SK-N-SH (cell line): ENCODE measurements at regions of chr1 and their contacts with region 1.

Region 1: DNA sequence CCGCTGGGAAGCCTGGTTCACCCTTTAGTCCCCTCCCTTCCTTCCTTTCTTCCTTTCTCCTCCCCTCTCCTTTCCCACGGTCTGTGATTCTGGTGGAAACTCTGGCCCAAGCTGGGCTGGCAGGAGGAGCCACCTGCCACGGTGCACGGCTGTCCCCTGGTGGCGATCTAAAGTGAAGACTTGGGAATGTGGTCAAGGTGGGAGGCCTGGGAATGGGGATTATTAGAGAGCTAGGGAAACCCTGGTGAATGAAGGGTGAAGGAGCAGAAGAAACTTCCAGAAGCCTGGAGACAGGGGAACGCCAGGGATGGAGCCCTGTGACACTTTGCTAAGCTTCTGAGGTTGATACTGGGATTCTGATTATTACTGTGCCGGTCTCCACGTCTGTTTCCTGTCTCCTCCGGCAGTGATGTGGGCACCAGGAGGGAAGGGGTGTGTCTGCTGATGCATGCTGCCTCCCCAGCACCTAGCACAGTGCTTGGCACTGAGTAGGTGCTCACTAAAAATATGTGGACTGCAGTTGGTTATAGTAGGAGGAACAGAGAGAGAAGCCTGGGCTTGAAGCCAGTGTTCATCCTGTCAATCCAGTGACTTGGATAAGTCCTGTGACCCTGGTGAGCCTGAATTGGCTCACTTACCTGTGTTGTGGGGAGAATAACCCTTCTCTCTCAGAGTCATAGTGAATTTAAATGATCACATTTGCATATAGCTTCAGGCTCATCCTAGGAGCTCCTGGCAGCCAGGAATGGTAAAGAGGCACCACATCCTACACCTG is 71.2 kb upstream of the NBPF3 start:
- DNase-seq: peak; percentile 84
- H3K4me3 ChIP-seq: peak overlapping the region in 1 of 2 experiments; percentile 51; a peak in 1 of 4 replicates
- H3K27ac ChIP-seq: no peak overlapping the region
- H3K4me1 ChIP-seq: no peaks in the 10 kb centered on the region; a peak in 1 of 4 replicates
- H3K27me3 ChIP-seq: no peaks in the 10 kb centered on the region
- CTCF ChIP-seq: peak; percentile 99
- EP300 ChIP-seq: no peak
- RAD21 ChIP-seq: peak; percentile 100

Region 2: DNA sequence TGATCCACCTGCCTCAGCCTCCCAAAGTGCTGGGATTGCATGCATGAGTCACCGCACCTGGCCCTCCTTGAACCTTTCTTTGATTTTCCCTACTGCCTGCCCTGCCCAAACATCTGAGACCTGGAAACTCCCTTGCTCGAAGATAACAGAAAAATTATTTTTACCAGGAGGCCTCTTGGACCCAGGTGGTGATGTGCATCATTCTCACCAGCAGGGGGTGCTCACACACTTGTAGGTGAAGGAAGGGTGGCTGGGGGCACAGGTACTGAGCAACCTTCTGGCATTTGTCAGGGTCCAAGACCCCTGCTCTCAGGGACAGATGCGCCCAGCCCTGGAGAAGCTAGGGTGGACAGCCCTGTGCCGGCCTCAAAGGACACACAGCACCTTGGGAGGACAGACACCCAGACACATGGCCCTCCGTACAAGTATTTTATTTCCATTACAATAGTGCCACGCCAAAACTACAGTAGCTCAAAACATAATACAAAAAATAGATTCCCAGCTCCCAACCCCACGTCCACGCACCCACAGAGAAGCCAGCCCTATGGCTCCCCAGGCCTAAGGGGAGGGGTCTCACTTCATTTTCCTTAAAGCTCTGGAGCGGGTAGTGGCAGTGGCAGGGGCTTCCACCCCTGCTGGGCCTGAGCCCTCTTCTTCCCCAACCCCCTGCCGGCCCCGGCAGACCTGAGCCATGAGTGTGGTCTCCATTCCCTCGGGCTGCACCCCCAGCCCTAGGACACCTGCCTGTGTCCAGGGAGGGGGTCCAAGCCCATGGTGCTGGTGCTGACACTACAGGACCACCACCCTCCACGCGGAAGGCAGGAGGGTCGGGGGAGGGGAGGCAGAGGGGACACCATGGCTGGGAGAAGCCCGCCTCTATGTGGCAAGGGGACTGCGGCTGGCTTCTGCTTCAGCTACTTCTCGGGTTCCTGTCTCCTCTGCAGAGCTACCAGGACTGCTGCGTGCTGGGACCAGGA is 151.6 kb before region 1 on chr1:
- CTCF ChIA-PET with region 1: interaction called, 80 read pairs
- POLR2A ChIA-PET with region 1: no interaction called
- DNase-seq: peak; percentile 67
- H3K4me3 ChIP-seq: no peak overlapping the region; a peak in 1 of 4 replicates
- H3K27ac ChIP-seq: no peak overlapping the region; a peak in 1 of 4 replicates
- H3K4me1 ChIP-seq: peaks cover 0 to 13% of the 10 kb centered on the region in 2 experiments; a peak in 1 of 4 replicates
- H3K27me3 ChIP-seq: no peaks in the 10 kb centered on the region
- CTCF ChIP-seq: peak; percentile 86
- EP300 ChIP-seq: no peak
- RAD21 ChIP-seq: peak; percentile 52

Region 3: GRCh38 chr1:21270086-21270689 is 98.5 kb before region 1 on chr1:
- CTCF ChIA-PET with region 1: interaction called, 58 read pairs
- POLR2A ChIA-PET with region 1: no interaction called
- DNase-seq: peak; percentile 75
- H3K4me3 ChIP-seq: no peak overlapping the region; a peak in 1 of 4 replicates
- H3K27ac ChIP-seq: peak overlapping the region in 1 of 2 experiments; percentile 59; a peak in 1 of 4 replicates
- H3K4me1 ChIP-seq: peaks cover 0 to 44% of the 10 kb centered on the region in 2 experiments; a peak in 1 of 4 replicates
- H3K27me3 ChIP-seq: no peaks in the 10 kb centered on the region
- CTCF ChIP-seq: peak; percentile 92
- EP300 ChIP-seq: no peak
- RAD21 ChIP-seq: peak; percentile 62

Region 4: DNA sequence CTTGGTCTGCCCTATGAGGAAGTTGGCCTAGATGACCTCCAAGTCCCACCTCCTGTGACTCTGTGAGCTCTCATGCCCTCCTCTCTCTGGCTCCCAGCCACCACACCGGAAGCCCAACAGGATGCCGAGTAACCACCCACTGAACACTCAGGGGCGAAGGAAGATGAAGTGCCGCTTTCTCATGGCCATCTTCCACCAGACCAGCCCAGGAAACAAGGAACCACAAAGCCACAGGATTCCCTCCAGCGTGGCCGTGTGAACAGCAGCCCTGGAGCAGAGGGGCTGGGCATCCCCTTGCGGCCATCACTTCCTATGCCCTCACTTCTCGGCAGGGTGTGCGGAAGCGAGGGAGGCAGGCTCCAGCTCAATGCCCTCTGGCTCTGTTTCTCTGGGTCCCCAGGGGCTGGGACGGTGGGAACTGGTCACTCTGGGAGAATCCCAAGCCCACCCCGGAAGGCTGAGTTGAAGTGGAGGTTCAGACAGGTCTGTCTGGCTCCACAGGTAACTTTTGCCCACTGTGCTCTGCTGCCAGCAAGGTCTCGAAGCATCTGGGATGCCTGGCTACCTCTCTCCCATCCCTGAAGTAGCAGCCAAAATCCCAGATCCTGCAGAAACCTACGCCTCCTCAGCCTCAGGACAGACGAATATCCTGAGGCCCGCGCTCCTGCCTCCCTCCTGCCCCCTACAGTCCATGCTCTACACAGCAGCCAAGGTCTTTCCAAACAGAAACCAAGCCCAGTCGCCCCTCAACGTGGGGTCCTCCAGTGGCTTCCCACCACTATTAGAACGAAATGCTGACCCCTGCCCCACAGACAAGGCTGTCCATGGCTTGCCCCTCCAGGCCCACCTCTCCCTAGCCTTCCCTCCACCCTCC is 34.3 kb before region 1 on chr1:
- CTCF ChIA-PET with region 1: interaction called, 20 read pairs
- POLR2A ChIA-PET with region 1: no interaction called
- DNase-seq: peak; percentile 59
- H3K4me3 ChIP-seq: peak overlapping the region in 1 of 2 experiments; percentile 23; a peak in 1 of 4 replicates
- H3K27ac ChIP-seq: peak overlapping the region; percentile 56 to 91; a peak in 3 of 4 replicates
- H3K4me1 ChIP-seq: peaks cover 26 to 64% of the 10 kb centered on the region in 2 experiments
- H3K27me3 ChIP-seq: no peaks in the 10 kb centered on the region
- CTCF ChIP-seq: peak; percentile 80
- EP300 ChIP-seq: no peak
- RAD21 ChIP-seq: peak; percentile 66

Region 5: DNA sequence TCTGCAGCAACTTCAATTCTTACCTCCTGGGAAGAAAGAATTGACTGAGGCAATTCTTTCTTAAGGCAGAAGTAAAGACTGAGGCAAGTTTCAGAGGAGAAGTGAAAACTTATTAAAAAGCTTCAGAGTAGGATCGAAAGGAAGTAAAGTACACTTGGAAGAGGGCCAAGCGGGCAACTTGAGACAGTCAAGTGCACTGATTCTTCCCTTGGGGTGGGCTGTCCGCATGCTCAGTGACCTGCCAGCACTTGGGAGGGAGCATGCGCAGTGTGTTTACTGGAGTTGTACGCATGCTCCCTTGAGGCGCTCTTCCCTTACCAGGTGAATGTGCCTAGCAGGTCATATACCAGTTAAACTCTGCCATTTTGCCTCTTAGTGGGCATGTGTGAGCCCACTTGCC is 15.9 kb after region 1 on chr1:
- CTCF ChIA-PET with region 1: interaction called, 20 read pairs
- POLR2A ChIA-PET with region 1: no interaction called
- DNase-seq: no peak
- H3K4me3 ChIP-seq: no peak overlapping the region
- H3K27ac ChIP-seq: no peak overlapping the region
- H3K4me1 ChIP-seq: peaks cover 0 to 2% of the 10 kb centered on the region in 2 experiments; a peak in 1 of 4 replicates
- H3K27me3 ChIP-seq: no peaks in the 10 kb centered on the region
- CTCF ChIP-seq: no peak
- EP300 ChIP-seq: no peak
- RAD21 ChIP-seq: no peak

Region 6: DNA sequence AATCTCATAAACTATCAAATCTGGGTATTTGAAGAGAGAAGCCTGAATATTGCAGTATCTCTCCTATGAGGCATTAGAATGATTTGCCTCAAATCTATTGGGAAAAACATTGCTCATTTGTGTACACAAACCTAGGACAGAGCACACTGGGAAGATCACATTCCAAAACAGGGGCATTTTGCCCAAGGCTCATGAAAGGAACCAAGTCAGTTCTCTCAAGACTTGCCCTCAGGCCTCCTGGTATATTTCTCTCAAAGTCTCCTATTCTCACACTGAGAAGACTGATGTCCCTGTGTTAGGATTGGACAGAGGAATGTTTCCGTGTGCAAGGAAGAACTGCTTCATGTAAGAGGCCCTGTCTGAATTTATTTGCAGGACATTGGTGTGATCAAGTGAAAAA is 110.3 kb after region 1 on chr1:
- CTCF ChIA-PET with region 1: no interaction called
- POLR2A ChIA-PET with region 1: no interaction called
- DNase-seq: no peak
- H3K4me3 ChIP-seq: no peak overlapping the region
- H3K27ac ChIP-seq: no peak overlapping the region
- H3K4me1 ChIP-seq: no peaks in the 10 kb centered on the region
- H3K27me3 ChIP-seq: no peaks in the 10 kb centered on the region
- CTCF ChIP-seq: no peak
- EP300 ChIP-seq: no peak
- RAD21 ChIP-seq: no peak

Region 7: DNA sequence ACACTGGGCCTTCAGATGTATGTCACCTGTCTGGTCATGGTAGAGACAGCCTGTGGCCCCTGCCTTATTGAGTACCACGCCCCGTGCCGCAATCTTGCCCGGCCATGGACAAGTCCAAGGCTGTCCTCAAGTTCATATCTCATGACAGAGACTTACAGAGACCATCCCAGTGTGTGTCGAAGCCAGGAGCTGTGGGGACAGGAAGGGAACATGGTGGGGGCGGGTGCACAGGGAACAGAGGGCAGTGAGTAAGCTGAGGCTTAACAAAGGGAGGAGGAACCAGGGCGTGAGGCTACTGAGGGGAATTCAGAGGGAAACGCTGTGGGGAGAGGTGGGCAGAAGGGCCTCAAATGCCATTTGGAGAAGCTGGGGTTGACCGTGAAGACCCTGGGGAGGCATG is 216.3 kb after region 1 on chr1:
- CTCF ChIA-PET with region 1: interaction called, 14 read pairs
- POLR2A ChIA-PET with region 1: no interaction called
- DNase-seq: no peak
- H3K4me3 ChIP-seq: no peak overlapping the region
- H3K27ac ChIP-seq: no peak overlapping the region
- H3K4me1 ChIP-seq: peaks cover 2 to 16% of the 10 kb centered on the region in 2 experiments; a peak in 2 of 4 replicates
- H3K27me3 ChIP-seq: no peaks in the 10 kb centered on the region
- CTCF ChIP-seq: no peak
- EP300 ChIP-seq: no peak
- RAD21 ChIP-seq: no peak